Sigmoid colon (tissue), 7 donors: ENCODE measurements at regions of chr21 and their contacts with region 1.

Region 1: GRCh38 chr21:39125752-39126485 is 57.3 kb downstream of the PSMG1 start:
- DNase-seq: peak; percentile 78
- H3K4me3 ChIP-seq: no peak overlapping the region
- H3K27ac ChIP-seq: peak overlapping the region in 3 of 4 donors; percentile 14 to 51 (median 45)
- H3K4me1 ChIP-seq: peaks cover 4 to 18% (median 9%) of the 10 kb centered on the region in 4 donors
- H3K27me3 ChIP-seq: no peaks in the 10 kb centered on the region
- CTCF ChIP-seq: peak; percentile 41 to 67 (median 60)
- EP300 ChIP-seq: no peak
- POLR2A ChIP-seq: no peak

Region 2: GRCh38 chr21:38733973-38734546 is 391.9 kb before region 1 on chr21:
- intact Hi-C with region 1: loop called (anchors 1 kb)
- DNase-seq: peak; percentile 92
- H3K4me3 ChIP-seq: peak overlapping the region in 3 of 4 donors; percentile 11 to 40 (median 38)
- H3K27ac ChIP-seq: peak overlapping the region; percentile 55 to 76 (median 75)
- H3K4me1 ChIP-seq: peaks cover 0 to 9% (median 6%) of the 10 kb centered on the region in 4 donors
- H3K27me3 ChIP-seq: no peaks in the 10 kb centered on the region
- CTCF ChIP-seq: peak; percentile 84 to 93 (median 90)
- EP300 ChIP-seq: no peak
- POLR2A ChIP-seq: no peak

Region 3: GRCh38 chr21:38999161-38999560 is 126.8 kb before region 1 on chr21:
- intact Hi-C with region 1: loop called (anchors 5 kb)
- DNase-seq: no peak
- H3K4me3 ChIP-seq: no peak overlapping the region
- H3K27ac ChIP-seq: no peak overlapping the region
- H3K4me1 ChIP-seq: peaks cover 0 to 10% (median 4%) of the 10 kb centered on the region in 4 donors
- H3K27me3 ChIP-seq: no peaks in the 10 kb centered on the region
- CTCF ChIP-seq: no peak
- EP300 ChIP-seq: no peak
- POLR2A ChIP-seq: no peak

Region 4: GRCh38 chr21:39217356-39218081 is 91.6 kb after region 1 on chr21:
- intact Hi-C with region 1: no loop called
- DNase-seq: no peak
- H3K4me3 ChIP-seq: no peak overlapping the region
- H3K27ac ChIP-seq: no peak overlapping the region
- H3K4me1 ChIP-seq: no peaks in the 10 kb centered on the region
- H3K27me3 ChIP-seq: no peaks in the 10 kb centered on the region
- CTCF ChIP-seq: no peak
- EP300 ChIP-seq: no peak
- POLR2A ChIP-seq: no peak